ENCODE measurements at regions of chr18 and their contacts with region 1.

Region 1: GRCh38 chr18:58529714-58530354 is 99.1 kb downstream of the ALPK2 start:
- DNase-seq: peak; percentile 57

Region 2: DNA sequence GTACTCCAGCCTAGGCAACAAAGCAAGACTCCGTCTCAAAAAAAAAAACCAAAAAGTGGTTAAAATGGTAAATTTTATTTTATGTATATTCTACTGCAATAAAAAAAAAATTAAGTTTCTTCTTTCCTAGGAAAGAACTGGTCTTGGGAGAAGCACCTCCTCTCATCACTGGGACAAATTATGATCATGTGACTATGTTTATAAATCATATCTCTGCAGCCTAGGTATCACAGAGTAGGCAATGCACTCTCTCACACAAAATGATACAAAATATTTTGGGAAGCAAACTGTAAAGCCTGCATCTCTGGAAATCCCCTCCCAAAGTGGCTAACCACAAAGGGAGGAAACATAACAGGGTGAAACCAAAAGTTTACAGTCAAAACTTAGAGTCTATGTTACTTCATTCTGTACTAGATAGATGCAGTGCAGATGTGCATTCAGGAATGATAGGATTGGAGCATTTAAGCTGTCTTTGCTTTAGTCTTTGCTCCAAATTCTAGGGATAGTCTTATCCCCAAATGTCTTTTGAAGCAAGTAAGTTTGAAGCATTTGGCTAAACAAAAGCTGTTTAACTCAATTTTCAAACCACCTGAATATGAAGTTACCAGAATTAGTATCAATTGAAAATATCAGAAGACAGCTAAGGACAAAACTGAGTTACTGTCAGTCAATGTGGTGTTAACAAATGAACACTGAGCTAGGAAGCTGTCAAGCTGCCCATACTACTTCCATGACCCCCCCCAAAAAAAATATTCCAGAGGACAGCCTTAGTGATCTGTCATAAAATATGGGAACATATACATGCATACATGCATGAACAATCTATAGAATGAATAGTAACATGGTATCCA is 120.4 kb after region 1 on chr18:
- in situ Hi-C with region 1: no loop called
- DNase-seq: no peak

Region 3: DNA sequence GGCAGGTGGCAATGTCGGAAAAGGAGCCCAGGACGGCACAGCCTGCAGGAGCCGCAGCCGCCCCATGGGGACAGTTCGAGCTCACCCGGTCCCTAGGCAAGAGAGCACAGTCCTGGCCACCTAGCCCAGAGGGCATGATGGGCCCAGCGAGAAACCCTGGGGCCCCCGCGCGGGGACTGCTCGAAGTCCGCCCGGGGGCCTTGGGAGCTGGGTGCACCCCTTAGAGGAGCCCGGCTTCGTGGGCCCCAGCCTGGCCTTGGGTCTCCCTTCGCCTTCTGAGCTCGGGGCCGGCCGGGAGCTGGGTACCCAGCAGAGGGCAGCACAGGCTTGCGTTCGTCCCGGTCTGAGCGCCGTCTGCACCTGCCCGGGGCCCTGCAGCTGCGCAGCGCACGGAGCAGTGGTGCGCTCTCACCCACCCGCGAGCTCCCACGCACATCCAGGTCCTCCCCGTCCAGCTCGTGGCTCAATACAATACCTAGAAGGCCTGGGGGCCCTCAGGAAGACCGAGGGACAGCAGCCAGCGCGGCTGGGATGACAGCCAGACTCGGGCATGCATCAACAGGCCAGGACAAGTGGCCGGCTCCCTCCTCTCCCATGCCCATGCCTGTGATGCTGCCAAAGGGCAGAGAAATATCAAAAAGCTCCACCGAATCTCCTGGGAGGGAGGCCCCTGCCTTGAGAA is 238.6 kb after region 1 on chr18:
- in situ Hi-C with region 1: loop called (anchors 10 kb)
- DNase-seq: peak; percentile 66

Measured in KBM-7 (cell line).